ENCODE measurements at regions of chr2 and their contacts with region 1.

Region 1: DNA sequence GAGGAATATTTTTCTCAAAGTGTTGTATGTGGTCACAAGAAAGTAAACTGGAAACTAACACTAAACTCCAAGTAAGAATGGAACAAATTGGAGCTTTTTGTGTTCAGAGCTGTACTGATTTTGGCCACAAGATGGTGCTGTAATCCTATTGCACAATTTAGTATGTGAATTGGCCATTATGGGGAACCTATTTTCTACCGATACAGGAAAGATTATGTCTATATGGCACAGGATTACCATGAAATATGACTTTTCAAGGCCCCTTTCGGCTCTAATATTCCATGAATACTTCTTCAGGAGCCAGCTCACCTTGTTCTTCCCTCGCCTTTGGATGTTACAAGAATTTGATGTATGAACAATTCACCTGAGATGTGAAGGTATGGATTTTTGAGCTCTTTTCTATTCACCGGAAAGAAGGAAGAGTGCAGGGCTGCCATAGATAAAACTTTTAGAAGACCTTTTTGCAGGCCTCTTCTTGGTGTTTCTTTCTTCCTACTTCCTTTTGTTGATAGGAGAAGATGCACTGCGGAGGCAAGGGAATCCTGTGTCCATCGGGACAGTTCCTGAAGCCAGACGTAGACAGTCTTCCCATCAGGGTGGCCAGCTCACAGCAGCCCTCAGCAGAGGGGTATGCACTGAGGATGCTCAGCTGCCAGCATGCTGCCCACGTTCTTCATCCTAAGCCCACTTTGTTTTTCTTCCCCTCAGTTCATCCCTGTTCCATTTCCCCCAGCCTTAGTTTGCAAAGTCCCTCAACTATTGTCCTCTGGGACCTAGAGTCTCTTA is 13.3 kb downstream of the MRPL44 start:
- DNase-seq: peak in 2 of 6 donors; percentile 13 to 53
- ATAC-seq: peak; percentile 50 to 92 (median 83)
- H3K4me3 ChIP-seq: no peak overlapping the region
- H3K27ac ChIP-seq: no peak overlapping the region
- H3K4me1 ChIP-seq: no peaks in the 10 kb centered on the region
- H3K27me3 ChIP-seq: no peaks in the 10 kb centered on the region
- CTCF ChIP-seq: peak; percentile 68 to 88 (median 83)

Region 2: GRCh38 chr2:224284134-224284946 is 313.8 kb after region 1 on chr2:
- intact Hi-C with region 1: loop called in 1 of 3 experiments (anchors 5 kb)
- DNase-seq: peak in 1 of 6 donors; percentile 13
- ATAC-seq: peak; percentile 43 to 75 (median 71)
- H3K4me3 ChIP-seq: no peak overlapping the region
- H3K27ac ChIP-seq: no peak overlapping the region
- H3K4me1 ChIP-seq: no peaks in the 10 kb centered on the region
- H3K27me3 ChIP-seq: no peaks in the 10 kb centered on the region
- CTCF ChIP-seq: peak; percentile 29 to 62 (median 43)